ENCODE measurements at regions of chr6 and their contacts with region 1.

Region 1: GRCh38 chr6:155530219-155530834 is 74.7 kb upstream of the NOX3 start:
- DNase-seq: no peak
- ATAC-seq: peak; percentile 46 to 74 (median 52)
- H3K4me3 ChIP-seq: no peak overlapping the region
- H3K27ac ChIP-seq: peak overlapping the region; percentile 82
- H3K4me1 ChIP-seq: peaks cover 7% of the 10 kb centered on the region
- H3K27me3 ChIP-seq: no peaks in the 10 kb centered on the region
- CTCF ChIP-seq: peak; percentile 74

Region 2: GRCh38 chr6:155327326-155328073 is 202.8 kb before region 1 on chr6:
- intact Hi-C with region 1: loop called (anchors 2 kb)
- DNase-seq: peak; percentile 29 to 65
- ATAC-seq: peak; percentile 65 to 93 (median 73)
- H3K4me3 ChIP-seq: no peak overlapping the region
- H3K27ac ChIP-seq: no peak overlapping the region
- H3K4me1 ChIP-seq: peaks cover 5% of the 10 kb centered on the region
- H3K27me3 ChIP-seq: no peaks in the 10 kb centered on the region
- CTCF ChIP-seq: peak; percentile 92

Region 3: GRCh38 chr6:155444120-155444917 is 86.0 kb before region 1 on chr6:
- intact Hi-C with region 1: no loop called
- DNase-seq: no peak
- ATAC-seq: no peak
- H3K4me3 ChIP-seq: no peak overlapping the region
- H3K27ac ChIP-seq: no peak overlapping the region
- H3K4me1 ChIP-seq: no peaks in the 10 kb centered on the region
- H3K27me3 ChIP-seq: no peaks in the 10 kb centered on the region
- CTCF ChIP-seq: no peak

Region 4: GRCh38 chr6:155510879-155511278 is 19.4 kb before region 1 on chr6:
- intact Hi-C with region 1: loop called in 1 of 2 experiments (anchors 2 kb)
- DNase-seq: no peak
- ATAC-seq: peak in 2 of 4 donors; percentile 34 to 51
- H3K4me3 ChIP-seq: no peak overlapping the region
- H3K27ac ChIP-seq: no peak overlapping the region
- H3K4me1 ChIP-seq: no peaks in the 10 kb centered on the region
- H3K27me3 ChIP-seq: no peaks in the 10 kb centered on the region
- CTCF ChIP-seq: no peak